ENCODE measurements at regions of chr17 and their contacts with region 1.

Region 1: GRCh38 chr17:21126645-21127510 is at the start of gene DHRS7B:
- DNase-seq: peak; percentile 99
- total RNA-seq, gene DHRS7B: 13.6 to 19.0 TPM

Region 2: GRCh38 chr17:21113716-21114115 is 13.2 kb before region 1 on chr17:
- intact Hi-C with region 1: no loop called
- DNase-seq: no peak

Region 3: GRCh38 chr17:21214015-21214776 is 87.3 kb after region 1 on chr17 and contains the start of gene TMEM11:
- intact Hi-C with region 1: loop called (anchors 5 to 10 kb)
- DNase-seq: peak; percentile 99
- total RNA-seq, gene TMEM11: 18.5 to 18.7 TPM

Region 4: DNA sequence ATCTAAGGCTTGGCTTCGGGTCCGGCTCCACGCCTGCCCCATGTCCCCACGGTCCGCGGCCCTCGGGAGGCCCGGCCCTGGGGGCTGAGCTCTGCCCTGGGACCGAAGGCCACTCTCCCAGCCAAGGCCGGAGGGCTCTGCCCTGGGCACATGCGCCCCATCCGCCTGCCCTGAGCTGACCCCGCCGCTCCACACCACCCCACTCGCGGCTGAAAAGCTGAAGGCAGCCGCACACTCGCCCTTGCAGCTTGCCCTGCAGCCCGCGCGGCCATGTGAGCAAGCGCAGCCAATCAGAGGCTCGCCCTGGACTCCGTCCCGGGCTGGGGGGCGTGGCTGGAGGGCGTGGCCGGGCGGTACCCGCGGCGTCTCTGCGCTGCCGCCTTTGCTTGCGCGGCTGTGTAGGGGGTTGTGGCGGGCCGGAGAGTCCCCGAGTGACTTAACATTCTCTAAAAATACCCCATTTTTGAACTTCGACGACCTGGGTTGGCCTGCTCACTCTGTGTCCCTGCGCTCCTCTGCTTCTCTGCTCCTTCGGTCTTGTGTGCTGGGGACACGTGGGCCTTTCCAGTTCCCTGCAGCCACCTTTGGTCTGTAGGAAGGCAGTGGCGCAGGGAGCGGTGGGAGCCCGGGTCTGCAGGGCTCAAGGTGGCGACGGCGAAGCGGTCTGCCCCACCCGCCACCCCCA is 148.8 kb after region 1 on chr17:
- intact Hi-C with region 1: loop called in 1 of 2 experiments (anchors 10 kb)
- DNase-seq: peak; percentile 98

Region 5: DNA sequence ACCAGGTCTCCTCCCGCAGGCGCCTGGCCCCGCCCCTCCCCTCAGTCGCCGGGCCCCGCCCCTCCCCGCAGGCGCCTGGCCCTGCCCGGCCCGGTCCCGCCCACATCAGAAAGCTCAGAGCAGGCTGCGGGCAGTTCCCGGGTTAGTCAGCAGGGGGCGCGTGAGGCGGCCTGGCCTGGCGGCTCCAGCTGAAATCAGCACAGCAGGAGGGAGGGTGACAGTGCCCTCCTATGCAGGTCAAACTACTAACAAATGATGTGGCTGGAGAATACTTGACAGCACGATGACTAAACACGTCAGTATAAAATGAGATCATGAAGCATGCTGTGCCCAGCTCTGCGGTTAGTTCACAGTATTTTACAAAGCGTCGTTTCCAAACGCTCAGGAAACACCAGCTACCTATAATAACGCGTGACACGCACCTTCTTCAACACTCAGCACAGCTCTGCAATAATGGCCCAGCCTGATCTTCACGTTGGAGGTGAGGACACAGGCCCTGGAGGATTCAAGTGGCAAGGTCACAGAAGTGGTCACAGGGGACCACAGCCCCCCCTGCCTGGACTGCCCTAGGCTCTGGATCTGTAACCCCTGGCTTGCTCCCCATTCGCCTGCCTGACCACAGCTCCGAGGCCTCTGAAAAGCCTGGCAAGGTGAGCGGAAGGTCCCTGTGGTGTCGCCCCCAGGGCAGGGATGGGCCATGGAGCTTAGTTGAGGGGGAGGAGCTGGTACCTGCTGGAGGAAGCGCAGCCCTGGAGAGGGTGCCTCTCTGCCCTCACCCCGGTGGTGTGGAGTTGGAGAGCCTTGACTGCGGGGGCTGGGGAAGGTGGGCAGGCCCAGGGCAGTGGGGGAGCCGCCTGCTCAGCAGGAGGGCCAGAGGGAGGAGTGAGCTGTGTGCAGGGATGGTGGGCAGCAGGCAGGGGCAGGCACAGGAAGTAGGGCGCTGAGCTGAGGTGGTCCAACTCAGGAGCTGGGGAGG is 330.5 kb after region 1 on chr17:
- intact Hi-C with region 1: loop called in 1 of 2 experiments (anchors 10 kb)
- DNase-seq: peak; percentile 97

Region 6: GRCh38 chr17:21511363-21512198 is 384.7 kb after region 1 on chr17:
- intact Hi-C with region 1: loop called in 1 of 2 experiments (anchors 5 kb)
- DNase-seq: peak; percentile 95

Measured in posterior vena cava (tissue), 2 donors.